Activated B cell treated with CpG ODN at 0.5 μM for 24 hours (primary cell): ENCODE measurements at regions of chr1 and their contacts with region 1.

Region 1: GRCh38 chr1:172180501-172181285 is 239.8 kb upstream of the C1orf105 start:
- DNase-seq: no peak
- ATAC-seq: peak; percentile 76
- H3K4me3 Mint-ChIP-seq: peak overlapping the region; percentile 79
- H3K27ac Mint-ChIP-seq: peak overlapping the region; percentile 97
- H3K4me1 Mint-ChIP-seq: peaks cover 53% of the 10 kb centered on the region
- H3K27me3 Mint-ChIP-seq: no peaks in the 10 kb centered on the region
- CTCF ChIP-seq: no peak

Region 2: DNA sequence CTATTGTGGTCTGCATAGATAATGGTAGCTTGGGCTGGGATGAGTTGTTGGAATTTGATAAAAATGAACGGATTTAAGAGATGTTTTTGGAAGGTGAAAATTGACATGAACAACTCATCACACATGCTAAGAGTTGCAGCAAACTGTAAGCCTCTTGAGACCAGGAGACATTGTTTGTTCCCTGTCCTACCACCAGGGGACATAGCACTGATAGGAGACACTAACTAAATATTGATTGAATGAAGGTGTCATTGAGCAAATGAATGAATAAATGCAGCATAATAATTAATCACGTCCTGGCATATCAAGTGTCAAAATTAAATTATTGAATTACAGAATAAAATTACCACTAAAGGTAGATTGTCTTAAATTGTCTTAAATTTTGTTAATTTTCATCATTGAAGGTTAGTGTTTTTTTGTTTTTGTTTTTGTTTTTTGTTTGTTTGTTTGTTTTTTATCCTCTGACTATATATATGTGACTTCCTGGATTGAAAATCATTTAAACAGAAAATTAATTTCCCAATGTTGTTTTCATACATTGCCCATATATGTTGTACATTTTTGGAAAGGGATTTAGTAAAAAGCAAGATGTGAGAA is 45.5 kb before region 1 on chr1:
- CTCF ChIA-PET with region 1: no interaction called
- POLR2A ChIA-PET with region 1: no interaction called
- intact Hi-C with region 1: loop called (anchors 5 kb)
- DNase-seq: no peak
- ATAC-seq: peak; percentile 49
- H3K4me3 Mint-ChIP-seq: no peak overlapping the region
- H3K27ac Mint-ChIP-seq: no peak overlapping the region
- H3K4me1 Mint-ChIP-seq: peaks cover 5% of the 10 kb centered on the region
- H3K27me3 Mint-ChIP-seq: no peaks in the 10 kb centered on the region
- CTCF ChIP-seq: no peak

Region 3: GRCh38 chr1:172343240-172344160 is 162.8 kb after region 1 on chr1:
- CTCF ChIA-PET with region 1: interaction called, 4 read pairs
- POLR2A ChIA-PET with region 1: interaction called, 16 read pairs
- intact Hi-C with region 1: loop called (anchors 1 kb)
- DNase-seq: no peak
- ATAC-seq: peak; percentile 61
- H3K4me3 Mint-ChIP-seq: peak overlapping the region; percentile 66
- H3K27ac Mint-ChIP-seq: peak overlapping the region; percentile 84
- H3K4me1 Mint-ChIP-seq: peaks cover 69% of the 10 kb centered on the region
- H3K27me3 Mint-ChIP-seq: no peaks in the 10 kb centered on the region
- CTCF ChIP-seq: no peak

Region 4: GRCh38 chr1:172390683-172391551 is 210.2 kb after region 1 on chr1:
- CTCF ChIA-PET with region 1: interaction called, 6 read pairs
- POLR2A ChIA-PET with region 1: interaction called, 44 read pairs
- intact Hi-C with region 1: loop called (anchors 1 kb)
- DNase-seq: peak; percentile 36
- ATAC-seq: peak; percentile 76
- H3K4me3 Mint-ChIP-seq: peak overlapping the region; percentile 88
- H3K27ac Mint-ChIP-seq: peak overlapping the region; percentile 99
- H3K4me1 Mint-ChIP-seq: peaks cover 64% of the 10 kb centered on the region
- H3K27me3 Mint-ChIP-seq: no peaks in the 10 kb centered on the region
- CTCF ChIP-seq: no peak

Region 5: GRCh38 chr1:173409613-173410012 is 1228.9 kb after region 1 on chr1:
- CTCF ChIA-PET with region 1: no interaction called
- POLR2A ChIA-PET with region 1: no interaction called
- intact Hi-C with region 1: loop called (anchors 10 kb)
- DNase-seq: no peak
- ATAC-seq: peak; percentile 25
- H3K4me3 Mint-ChIP-seq: peak overlapping the region; percentile 81
- H3K27ac Mint-ChIP-seq: peak overlapping the region; percentile 95
- H3K4me1 Mint-ChIP-seq: peaks cover 91% of the 10 kb centered on the region
- H3K27me3 Mint-ChIP-seq: no peaks in the 10 kb centered on the region
- CTCF ChIP-seq: no peak